Transverse colon (tissue), 4 donors: ENCODE measurements at regions of chr11 and their contacts with region 1.

Region 1: DNA sequence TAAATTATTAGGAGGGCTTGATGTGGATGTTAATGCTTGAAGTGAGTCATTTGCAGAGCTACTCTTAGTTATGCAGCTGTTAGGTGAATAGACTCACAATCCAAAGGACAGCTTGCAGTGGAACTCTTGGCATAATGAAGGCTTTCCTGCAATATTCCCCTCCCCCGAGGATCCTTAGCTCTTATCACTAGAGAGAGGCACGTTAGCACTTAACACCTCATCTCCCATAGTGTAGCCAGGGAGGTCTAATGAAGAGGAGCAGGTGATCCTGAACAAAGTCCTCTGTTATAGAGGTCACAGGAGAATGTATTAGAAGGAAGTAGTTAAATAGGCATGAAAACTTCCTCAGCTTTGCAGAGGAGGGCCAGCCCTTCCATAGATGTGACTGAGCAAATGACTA is 919.2 kb upstream of the FAT3 start:
- DNase-seq: no peak
- H3K4me3 ChIP-seq: no peak overlapping the region
- H3K27ac ChIP-seq: no peak overlapping the region
- H3K4me1 ChIP-seq: no peaks in the 10 kb centered on the region
- H3K27me3 ChIP-seq: no peaks in the 10 kb centered on the region
- CTCF ChIP-seq: no peak
- EP300 ChIP-seq: no peak
- POLR2A ChIP-seq: no peak

Region 2: GRCh38 chr11:93289782-93290463 is 1984.5 kb after region 1 on chr11:
- in situ Hi-C with region 1: no loop called
- intact Hi-C with region 1: loop called (anchors 5 kb)
- DNase-seq: no peak
- H3K4me3 ChIP-seq: no peak overlapping the region
- H3K27ac ChIP-seq: no peak overlapping the region
- H3K4me1 ChIP-seq: no peaks in the 10 kb centered on the region
- H3K27me3 ChIP-seq: no peaks in the 10 kb centered on the region
- CTCF ChIP-seq: no peak
- EP300 ChIP-seq: no peak
- POLR2A ChIP-seq: no peak